ENCODE measurements at regions of chr18 and their contacts with region 1.

Region 1: GRCh38 chr18:63320046-63320689 is 599 bp upstream of the BCL2 start:
- DNase-seq: peak; percentile 91 to 93
- ATAC-seq: peak; percentile 79
- H3K4me3 ChIP-seq: peak overlapping the region; percentile 87 to 97
- H3K27ac ChIP-seq: peak overlapping the region; percentile 44 to 67
- H3K4me1 ChIP-seq: no peaks in the 10 kb centered on the region
- H3K27me3 ChIP-seq: no peaks in the 10 kb centered on the region

Region 2: DNA sequence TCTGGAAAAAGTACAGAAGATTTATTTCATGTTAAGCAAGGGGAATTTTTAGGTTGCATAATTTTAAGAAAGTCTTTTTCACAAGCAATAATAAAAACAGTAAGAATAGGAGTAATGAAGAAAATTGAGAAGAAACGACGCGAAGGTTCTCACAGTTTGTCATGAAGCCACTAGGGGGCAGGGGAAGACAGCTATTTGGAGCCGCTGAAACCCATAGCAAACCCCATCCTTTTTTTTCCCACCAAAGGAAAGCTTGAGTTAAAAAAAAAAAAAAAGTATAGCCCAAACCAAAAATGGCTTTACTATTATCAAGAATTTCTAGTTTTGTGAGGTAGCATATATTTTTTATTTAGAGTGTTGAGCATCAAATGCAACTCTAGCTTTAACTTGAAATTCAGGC is 303.9 kb before region 1 on chr18:
- intact Hi-C with region 1: loop called (anchors 1 to 5 kb)
- DNase-seq: no peak
- ATAC-seq: peak; percentile 83
- H3K4me3 ChIP-seq: no peak overlapping the region
- H3K27ac ChIP-seq: no peak overlapping the region
- H3K4me1 ChIP-seq: no peaks in the 10 kb centered on the region
- H3K27me3 ChIP-seq: no peaks in the 10 kb centered on the region

Region 3: GRCh38 chr18:63098018-63098981 is 221.9 kb before region 1 on chr18:
- intact Hi-C with region 1: no loop called
- DNase-seq: no peak
- ATAC-seq: no peak
- H3K4me3 ChIP-seq: no peak overlapping the region
- H3K27ac ChIP-seq: no peak overlapping the region
- H3K4me1 ChIP-seq: peaks cover 0 to 2% of the 10 kb centered on the region in 2 donors
- H3K27me3 ChIP-seq: no peaks in the 10 kb centered on the region

Region 4: GRCh38 chr18:63131106-63131958 is 188.8 kb before region 1 on chr18:
- intact Hi-C with region 1: loop called (anchors 2 kb)
- DNase-seq: no peak
- ATAC-seq: peak; percentile 67
- H3K4me3 ChIP-seq: no peak overlapping the region
- H3K27ac ChIP-seq: peak overlapping the region; percentile 33
- H3K4me1 ChIP-seq: no peaks in the 10 kb centered on the region
- H3K27me3 ChIP-seq: no peaks in the 10 kb centered on the region

Region 5: DNA sequence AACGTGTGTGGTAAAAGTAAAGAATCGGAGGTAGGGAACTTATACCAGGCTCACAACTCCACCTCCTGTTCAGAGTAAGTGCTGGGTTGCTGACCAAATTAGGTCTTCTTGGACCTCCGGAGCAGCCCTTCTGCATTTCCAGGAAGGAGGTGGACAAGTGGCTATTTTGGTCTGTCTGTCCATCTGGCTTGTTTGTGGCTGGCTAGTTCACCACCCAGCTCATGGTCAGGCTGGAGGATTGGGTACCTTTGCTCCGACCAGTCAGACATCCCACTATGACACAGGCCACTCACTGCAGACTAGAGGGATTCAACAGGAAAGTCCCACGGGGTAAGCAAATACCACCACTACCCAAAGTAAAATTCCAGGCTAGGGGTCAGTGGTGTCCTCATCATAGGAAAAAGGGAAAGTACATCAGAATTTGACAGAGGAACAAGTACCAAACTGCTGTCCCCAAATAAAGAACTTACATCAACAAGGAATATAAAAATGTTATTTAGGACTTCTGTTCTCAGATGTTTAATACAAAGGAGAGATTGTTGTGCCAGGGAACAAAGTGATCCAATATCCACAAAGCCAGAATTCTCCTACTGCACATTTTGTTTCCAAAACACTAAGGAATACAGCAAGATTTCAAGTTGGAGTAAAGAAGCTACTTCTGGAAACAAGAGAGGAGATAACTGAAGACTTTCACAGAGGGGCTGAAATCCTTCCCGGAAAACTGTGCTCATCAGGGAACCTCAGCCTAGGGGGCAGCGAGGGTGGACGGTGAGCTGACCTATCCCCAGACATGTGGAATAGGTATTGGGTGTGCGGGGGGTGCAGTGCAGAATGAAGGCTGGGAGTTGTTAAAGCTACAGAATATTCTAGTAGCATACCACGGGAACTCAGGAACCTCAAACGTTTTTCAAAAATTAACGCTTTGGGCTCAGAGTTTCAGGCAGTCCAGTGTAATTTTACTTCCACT is 57.5 kb before region 1 on chr18:
- intact Hi-C with region 1: loop called (anchors 2 kb)
- DNase-seq: peak; percentile 71 to 72
- ATAC-seq: peak; percentile 90
- H3K4me3 ChIP-seq: no peak overlapping the region
- H3K27ac ChIP-seq: peak overlapping the region; percentile 72 to 94
- H3K4me1 ChIP-seq: no peaks in the 10 kb centered on the region
- H3K27me3 ChIP-seq: no peaks in the 10 kb centered on the region

Region 6: DNA sequence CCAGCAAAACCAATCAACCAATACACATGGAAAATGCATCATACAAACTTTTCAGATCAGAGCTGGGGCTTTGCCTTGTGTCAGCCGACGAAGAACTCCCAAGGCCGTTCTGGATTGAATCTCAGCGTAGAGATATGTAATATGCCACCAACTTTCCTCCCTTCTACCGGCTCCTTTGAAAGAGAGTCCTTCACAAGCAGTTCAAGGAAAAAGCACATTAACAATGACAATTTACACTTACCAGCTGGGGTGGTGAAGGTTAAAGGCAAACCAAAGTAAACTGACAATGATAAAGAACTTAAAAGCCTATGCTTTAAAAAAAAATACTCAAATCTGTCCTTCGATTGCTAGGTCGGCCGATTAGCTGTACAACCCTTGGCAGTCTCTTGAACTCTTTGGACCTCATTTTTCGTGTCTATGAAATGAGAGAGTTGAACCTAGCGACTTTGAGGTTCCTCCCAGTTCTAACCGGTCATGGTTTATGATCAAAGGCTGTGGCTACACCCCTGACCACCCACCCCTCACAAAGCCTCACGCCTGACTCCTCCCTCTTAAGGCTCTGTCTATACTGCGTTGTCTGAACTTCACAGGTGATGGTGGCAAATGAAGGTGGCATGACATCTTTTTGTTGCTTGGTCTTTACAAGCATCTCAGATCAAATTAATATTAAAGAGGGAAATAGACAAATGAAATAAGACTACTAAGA is 46.8 kb before region 1 on chr18:
- intact Hi-C with region 1: no loop called
- DNase-seq: no peak
- ATAC-seq: no peak
- H3K4me3 ChIP-seq: no peak overlapping the region
- H3K27ac ChIP-seq: no peak overlapping the region
- H3K4me1 ChIP-seq: no peaks in the 10 kb centered on the region
- H3K27me3 ChIP-seq: no peaks in the 10 kb centered on the region

Region 7: GRCh38 chr18:63367053-63367953 is 47.1 kb after region 1 on chr18 and contains the start of gene KDSR:
- intact Hi-C with region 1: loop called in 1 of 2 experiments (anchors 2 kb)
- DNase-seq: peak; percentile 98
- ATAC-seq: peak; percentile 98
- H3K4me3 ChIP-seq: peak within 1 kb of the TSS; percentile 85 to 87
- H3K27ac ChIP-seq: peak within 1 kb of the TSS; percentile 71 to 96
- H3K4me1 ChIP-seq: no peaks in the 10 kb centered on the region
- H3K27me3 ChIP-seq: no peaks in the 10 kb centered on the region
- total RNA-seq, gene KDSR: 74.3 to 91.0 TPM

Region 8: DNA sequence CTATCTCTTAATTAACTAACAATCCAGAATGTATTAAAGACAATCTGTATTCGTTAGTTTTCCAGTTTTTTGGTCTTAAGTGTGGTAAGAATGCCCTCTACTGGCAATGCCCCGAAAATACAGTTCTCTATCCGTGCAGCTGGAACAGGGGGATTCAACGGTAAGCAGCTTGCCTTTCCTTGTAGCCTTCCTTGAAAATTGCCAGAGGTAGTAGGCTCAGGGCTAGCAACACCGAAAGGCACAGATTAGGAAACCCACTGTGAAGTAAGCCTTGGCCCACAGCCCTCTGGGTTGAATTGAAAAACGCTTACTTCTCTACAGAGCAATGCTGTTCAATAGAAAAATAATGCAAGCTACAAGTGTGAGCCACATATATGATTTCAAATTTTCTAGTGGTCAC is 119.2 kb after region 1 on chr18:
- intact Hi-C with region 1: loop called in 1 of 2 experiments (anchors 5 kb)
- DNase-seq: no peak
- ATAC-seq: peak; percentile 89
- H3K4me3 ChIP-seq: no peak overlapping the region
- H3K27ac ChIP-seq: no peak overlapping the region
- H3K4me1 ChIP-seq: no peaks in the 10 kb centered on the region
- H3K27me3 ChIP-seq: no peaks in the 10 kb centered on the region